CD4-positive, alpha-beta T cell (primary cell): ENCODE measurements at regions of chr2 and their contacts with region 1.

Region 1: DNA sequence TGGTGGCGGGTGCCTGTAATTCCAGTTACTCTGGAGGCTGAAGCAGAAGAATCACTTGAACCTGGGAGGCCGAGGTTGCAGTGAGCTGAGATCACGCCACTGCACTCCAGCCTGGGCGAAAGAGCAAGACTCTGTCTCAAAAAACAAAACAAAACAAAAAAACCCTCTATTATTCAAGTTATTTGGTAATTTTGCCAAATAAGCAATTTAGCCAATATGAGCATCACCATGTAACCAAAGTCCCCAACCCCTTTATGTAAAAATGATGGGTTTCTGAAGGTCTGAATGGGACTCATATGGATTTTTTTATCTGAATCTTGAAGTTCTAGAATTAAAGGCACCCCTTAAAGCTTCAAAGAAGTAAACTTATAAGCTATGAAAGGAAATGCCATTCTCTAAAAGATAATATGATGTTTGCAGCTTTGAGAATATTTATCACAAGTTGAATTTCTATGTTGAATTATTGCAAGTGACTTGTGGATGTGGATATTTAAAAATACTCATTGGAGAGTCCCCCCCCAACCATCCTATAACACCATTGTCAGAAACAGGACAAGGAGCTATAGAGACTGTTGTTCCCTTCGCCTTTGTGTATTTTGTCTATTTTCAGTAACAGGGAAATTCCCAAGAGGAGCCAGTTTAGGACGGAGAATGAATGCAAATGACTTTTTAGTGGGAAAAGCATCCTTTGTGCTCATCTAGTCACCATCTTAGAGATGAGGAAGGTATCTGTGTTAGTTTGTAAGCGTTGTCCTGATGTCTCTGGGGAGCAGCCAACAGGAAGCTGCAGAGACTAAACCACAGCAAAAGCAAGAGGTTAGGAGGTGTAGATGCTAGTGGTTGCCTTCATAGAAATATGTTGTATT is 68.3 kb downstream of the TET3 start:
- DNase-seq: peak in 7 of 14 experiments; percentile 10 to 61 (median 47)
- ATAC-seq: peak; percentile 99
- H3K4me3 ChIP-seq: no peak overlapping the region
- H3K4me3 Mint-ChIP-seq: peak overlapping the region; percentile 78
- H3K27ac ChIP-seq: peak overlapping the region; percentile 9 to 38
- H3K27ac Mint-ChIP-seq: peak overlapping the region; percentile 83
- H3K4me1 ChIP-seq: peaks cover 21% of the 10 kb centered on the region
- H3K4me1 Mint-ChIP-seq: peaks cover 67% of the 10 kb centered on the region
- H3K27me3 ChIP-seq: no peaks in the 10 kb centered on the region
- H3K27me3 Mint-ChIP-seq: no peaks in the 10 kb centered on the region
- CTCF ChIP-seq: no peak

Region 2: DNA sequence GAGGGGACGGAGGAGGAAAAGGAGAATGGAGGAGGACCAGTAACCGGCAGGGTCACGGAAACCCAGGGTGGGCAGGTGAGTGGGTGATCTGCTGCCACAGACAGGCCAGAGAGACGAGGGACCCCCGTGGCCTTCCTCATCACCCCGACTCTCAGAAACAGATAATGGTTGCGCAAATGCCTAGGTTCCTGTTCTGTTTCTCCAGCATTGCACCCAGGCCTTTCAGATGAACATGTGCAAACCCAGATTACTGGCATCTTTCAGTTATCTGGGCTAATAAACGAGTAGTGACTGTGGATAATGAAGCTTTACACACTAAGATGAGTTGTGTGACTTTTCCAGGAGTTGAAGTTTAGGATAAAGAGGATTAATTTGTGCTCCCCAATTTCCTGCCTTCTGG is 21.7 kb before region 1 on chr2:
- CTCF ChIA-PET with region 1: interaction called, 3 read pairs
- POLR2A ChIA-PET with region 1: interaction called, 10 read pairs
- intact Hi-C with region 1: loop called in 1 of 2 experiments (anchors 2 kb)
- DNase-seq: no peak
- ATAC-seq: no peak
- H3K4me3 ChIP-seq: no peak overlapping the region
- H3K4me3 Mint-ChIP-seq: peak overlapping the region; percentile 77
- H3K27ac ChIP-seq: peak overlapping the region in 1 of 2 donors; percentile 15
- H3K27ac Mint-ChIP-seq: peak overlapping the region; percentile 79
- H3K4me1 ChIP-seq: peaks cover 40% of the 10 kb centered on the region
- H3K4me1 Mint-ChIP-seq: peaks cover 81% of the 10 kb centered on the region
- H3K27me3 ChIP-seq: no peaks in the 10 kb centered on the region
- H3K27me3 Mint-ChIP-seq: no peaks in the 10 kb centered on the region
- CTCF ChIP-seq: no peak

Region 3: GRCh38 chr2:74041182-74041581 is 11.8 kb before region 1 on chr2:
- CTCF ChIA-PET with region 1: no interaction called
- POLR2A ChIA-PET with region 1: interaction called, 16 read pairs
- intact Hi-C with region 1: no loop called
- DNase-seq: no peak
- ATAC-seq: no peak
- H3K4me3 ChIP-seq: no peak overlapping the region
- H3K4me3 Mint-ChIP-seq: no peak overlapping the region
- H3K27ac ChIP-seq: no peak overlapping the region
- H3K27ac Mint-ChIP-seq: peak overlapping the region; percentile 55
- H3K4me1 ChIP-seq: peaks cover 45% of the 10 kb centered on the region
- H3K4me1 Mint-ChIP-seq: peaks cover 89% of the 10 kb centered on the region
- H3K27me3 ChIP-seq: no peaks in the 10 kb centered on the region
- H3K27me3 Mint-ChIP-seq: no peaks in the 10 kb centered on the region
- CTCF ChIP-seq: no peak

Region 4: DNA sequence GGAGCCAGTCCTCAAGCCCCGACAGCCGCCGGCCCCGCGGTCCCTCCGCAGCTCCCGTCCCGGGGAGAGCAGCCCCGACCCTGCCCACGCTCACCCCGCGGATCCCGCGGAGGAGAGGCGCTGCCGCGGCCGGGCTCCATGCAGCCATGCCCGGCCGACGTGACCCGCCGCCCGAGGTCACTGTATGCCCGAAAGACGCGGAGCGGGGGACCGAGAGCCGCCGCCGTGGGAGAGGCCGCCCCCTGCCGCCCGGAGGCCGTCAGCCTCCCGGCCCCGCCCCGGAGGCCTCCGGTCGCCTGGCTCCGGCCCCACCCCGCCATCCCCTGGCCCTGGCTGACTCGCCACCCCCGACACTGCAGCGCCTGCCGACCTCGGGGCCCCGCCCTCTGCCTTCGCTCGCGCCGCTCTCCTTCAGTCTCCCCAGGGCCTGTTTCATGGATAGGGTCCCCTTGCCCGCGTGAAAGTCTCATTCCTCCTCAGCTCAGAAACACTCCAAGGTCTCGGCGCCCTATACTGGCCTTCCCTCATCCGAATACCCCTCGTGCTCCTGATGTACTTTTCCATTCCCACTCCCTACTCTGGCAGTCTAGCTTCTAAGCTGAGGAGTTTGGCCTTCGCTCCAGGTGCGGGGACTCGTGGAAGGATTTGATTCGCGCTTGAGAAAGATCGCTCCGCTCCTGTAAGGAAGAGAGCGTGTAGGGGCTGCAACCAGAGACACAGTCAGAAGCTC is 94.9 kb after region 1 on chr2 and contains the start of gene BOLA3:
- CTCF ChIA-PET with region 1: no interaction called
- POLR2A ChIA-PET with region 1: no interaction called
- intact Hi-C with region 1: no loop called
- DNase-seq: peak; percentile 60 to 89 (median 76)
- ATAC-seq: peak; percentile 87
- H3K4me3 ChIP-seq: peak within 1 kb of the TSS; percentile 62
- H3K4me3 Mint-ChIP-seq: no peak within 1 kb of the TSS
- H3K27ac ChIP-seq: peak within 1 kb of the TSS; percentile 29 to 65
- H3K27ac Mint-ChIP-seq: no peak within 1 kb of the TSS
- H3K4me1 ChIP-seq: peaks cover 23% of the 10 kb centered on the region
- H3K4me1 Mint-ChIP-seq: no peaks in the 10 kb centered on the region
- H3K27me3 ChIP-seq: no peaks in the 10 kb centered on the region
- H3K27me3 Mint-ChIP-seq: no peaks in the 10 kb centered on the region
- CTCF ChIP-seq: peak; percentile 77
- total RNA-seq, gene BOLA3: 11.4 to 12.9 TPM